A549 (cell line): ENCODE measurements at regions of chr6 and their contacts with region 1.

Region 1: GRCh38 chr6:151323791-151324487 is 67.4 kb downstream of the ZBTB2 start:
- DNase-seq: peak; percentile 20 to 84
- ATAC-seq: peak; percentile 72 to 85
- H3K4me3 ChIP-seq: no peak overlapping the region
- H3K27ac ChIP-seq: peak overlapping the region; percentile 83 to 84
- H3K4me1 ChIP-seq: peaks cover 30% of the 10 kb centered on the region
- CTCF ChIP-seq: peak; percentile 76
- EP300 ChIP-seq: no peak
- POLR2A ChIP-seq: no peak
- RAD21 ChIP-seq: peak; percentile 89 to 91

Region 2: DNA sequence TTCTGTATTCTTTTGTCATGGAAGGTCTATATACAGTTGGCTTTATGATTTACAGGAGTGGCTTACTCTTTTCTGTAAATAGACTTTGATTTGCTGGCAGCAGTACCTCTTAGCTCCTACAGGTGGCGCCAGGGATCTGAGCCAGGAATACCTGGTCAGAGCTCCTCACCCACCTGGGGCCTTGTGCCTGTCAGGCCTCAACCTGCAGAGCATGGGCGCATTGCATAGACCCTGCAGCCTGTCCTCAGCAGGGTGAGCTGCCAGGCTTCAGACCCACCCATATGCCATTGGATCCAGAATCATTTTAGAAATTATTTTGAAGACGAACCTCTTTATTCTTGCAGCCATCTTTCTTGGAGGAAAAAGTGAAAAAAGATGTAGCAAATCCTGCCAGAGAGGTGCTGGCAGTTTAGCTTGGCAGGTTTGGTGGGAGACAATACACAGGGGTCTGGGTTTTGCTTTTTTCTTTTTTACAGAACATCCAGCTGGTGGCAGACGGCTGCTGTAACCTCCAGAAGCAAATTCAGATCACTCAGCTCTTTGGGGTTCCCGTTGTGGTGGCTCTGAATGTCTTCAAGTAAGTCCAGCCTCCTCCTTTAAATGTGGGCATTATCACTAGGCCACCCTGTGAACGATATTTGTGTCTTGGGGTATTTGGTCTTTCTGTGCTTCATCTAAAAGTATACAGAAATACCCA is 309.4 kb before region 1 on chr6:
- CTCF ChIA-PET with region 1: interaction called, 192 read pairs
- POLR2A ChIA-PET with region 1: interaction called, 5 read pairs
- DNase-seq: peak; percentile 21 to 78
- ATAC-seq: peak; percentile 71 to 84
- H3K4me3 ChIP-seq: no peak overlapping the region
- H3K27ac ChIP-seq: peak overlapping the region; percentile 66 to 78
- H3K4me1 ChIP-seq: peaks cover 36% of the 10 kb centered on the region
- CTCF ChIP-seq: peak; percentile 78
- EP300 ChIP-seq: no peak
- POLR2A ChIP-seq: no peak
- RAD21 ChIP-seq: peak; percentile 88 to 94

Region 3: GRCh38 chr6:151036869-151037680 is 286.9 kb before region 1 on chr6:
- CTCF ChIA-PET with region 1: interaction called, 13 read pairs
- POLR2A ChIA-PET with region 1: no interaction called
- DNase-seq: no peak
- ATAC-seq: no peak
- H3K4me3 ChIP-seq: no peak overlapping the region
- H3K27ac ChIP-seq: peak overlapping the region; percentile 97 to 99
- H3K4me1 ChIP-seq: peaks cover 55% of the 10 kb centered on the region
- CTCF ChIP-seq: no peak
- EP300 ChIP-seq: no peak
- POLR2A ChIP-seq: no peak
- RAD21 ChIP-seq: no peak

Region 4: DNA sequence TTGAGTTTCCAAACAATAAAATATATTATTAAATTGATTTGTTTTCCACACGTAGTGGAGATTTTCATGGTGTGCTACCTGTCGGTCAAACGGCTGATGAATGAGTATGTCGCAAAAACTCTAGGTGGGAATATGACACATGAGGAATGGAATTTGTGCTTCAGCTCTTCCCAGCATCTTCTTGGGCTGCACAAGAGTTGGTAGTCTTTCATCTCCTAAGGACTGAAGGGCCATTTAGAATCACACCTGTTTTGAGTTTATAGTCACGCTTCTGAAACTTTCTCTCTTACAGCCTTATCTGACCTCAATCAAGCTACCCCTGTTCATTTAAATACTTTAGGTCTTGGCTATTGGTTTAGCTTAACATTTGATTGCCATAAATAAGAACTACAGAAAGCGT is 241.9 kb before region 1 on chr6:
- CTCF ChIA-PET with region 1: interaction called, 12 read pairs
- POLR2A ChIA-PET with region 1: no interaction called
- DNase-seq: peak; percentile 12 to 55
- ATAC-seq: peak in 1 of 2 experiments; percentile 37; a peak in 2 of 6 replicates
- H3K4me3 ChIP-seq: no peak overlapping the region
- H3K27ac ChIP-seq: peak overlapping the region; percentile 66 to 84
- H3K4me1 ChIP-seq: peaks cover 35% of the 10 kb centered on the region
- CTCF ChIP-seq: no peak
- EP300 ChIP-seq: 0 out of 5 replicates have a peak, but pooled peaks of 1 of the 2 experiments have one; percentile 29
- POLR2A ChIP-seq: no peak
- RAD21 ChIP-seq: no peak

Region 5: DNA sequence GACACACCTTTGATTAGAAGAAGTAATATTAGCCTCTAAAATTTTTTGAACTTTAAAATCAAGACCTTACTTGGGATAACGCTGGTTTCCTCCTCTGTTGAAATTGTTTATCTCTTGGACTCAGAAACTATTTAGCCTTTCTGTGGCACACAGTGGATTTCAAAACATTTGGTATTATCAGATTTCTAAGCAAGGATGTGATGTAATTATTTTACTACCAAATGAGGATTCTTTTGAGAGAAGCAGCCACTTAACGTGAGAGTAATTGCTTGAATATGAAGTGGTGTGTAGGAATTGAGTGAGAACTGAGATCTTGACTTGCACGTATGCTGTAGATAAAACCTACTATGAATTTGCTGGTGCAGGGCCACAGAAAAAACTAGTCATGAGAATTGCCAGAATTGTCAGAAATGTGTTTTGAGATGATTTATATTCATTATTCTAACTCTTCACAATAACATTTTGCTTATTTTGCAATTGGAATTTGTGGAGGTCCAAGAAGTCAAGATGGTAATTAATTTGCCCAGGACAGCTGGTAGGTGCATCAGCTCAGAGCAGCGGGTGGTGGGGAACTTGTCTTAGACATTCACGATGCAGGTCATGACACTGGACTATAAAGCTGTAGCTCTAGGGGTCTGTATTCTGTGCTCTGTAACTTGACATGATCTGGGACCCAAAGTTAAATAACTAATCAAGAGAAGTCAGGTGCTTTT is 30.8 kb before region 1 on chr6:
- CTCF ChIA-PET with region 1: interaction called, 10 read pairs
- POLR2A ChIA-PET with region 1: no interaction called
- DNase-seq: no peak
- ATAC-seq: no peak
- H3K4me3 ChIP-seq: no peak overlapping the region
- H3K27ac ChIP-seq: no peak overlapping the region
- H3K4me1 ChIP-seq: no peaks in the 10 kb centered on the region
- CTCF ChIP-seq: no peak
- EP300 ChIP-seq: no peak
- POLR2A ChIP-seq: no peak
- RAD21 ChIP-seq: no peak

Region 6: DNA sequence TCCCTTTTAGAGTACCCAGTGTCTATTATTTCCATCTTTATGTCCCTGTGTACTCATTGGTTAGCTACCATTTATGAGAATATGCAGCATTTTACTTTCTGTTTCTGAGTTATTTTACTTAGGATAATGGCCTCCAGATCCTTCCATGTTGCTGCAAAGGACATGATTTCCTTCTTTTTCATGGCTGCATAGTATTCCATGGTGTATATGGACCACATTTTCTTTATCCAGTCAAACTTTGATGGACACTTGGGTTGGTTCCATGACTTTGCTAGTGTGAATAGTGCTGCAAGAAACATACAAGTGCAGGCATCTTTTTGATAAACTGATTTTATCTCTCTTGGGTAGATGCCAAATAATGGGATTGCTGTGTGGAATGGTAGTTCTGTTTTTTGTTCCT is 12.0 kb after region 1 on chr6:
- CTCF ChIA-PET with region 1: interaction called, 43 read pairs
- POLR2A ChIA-PET with region 1: interaction called, 7 read pairs
- DNase-seq: no peak
- ATAC-seq: no peak
- H3K4me3 ChIP-seq: no peak overlapping the region
- H3K27ac ChIP-seq: no peak overlapping the region
- H3K4me1 ChIP-seq: 0 out of 3 replicates have a peak, but pooled peaks cover 3% of the 10 kb centered on the region
- CTCF ChIP-seq: no peak
- EP300 ChIP-seq: no peak
- POLR2A ChIP-seq: no peak
- RAD21 ChIP-seq: no peak